ENCODE measurements at regions of chr22 and their contacts with region 1.

Region 1: GRCh38 chr22:41589391-41590241 is at the start of gene PMM1:
- DNase-seq: peak; percentile 100
- ATAC-seq: peak; percentile 97
- H3K4me3 Mint-ChIP-seq: peak within 1 kb of the TSS; percentile 99
- H3K27ac Mint-ChIP-seq: peak within 1 kb of the TSS; percentile 96
- H3K4me1 Mint-ChIP-seq: peaks cover 20% of the 10 kb centered on the region
- H3K27me3 Mint-ChIP-seq: no peaks in the 10 kb centered on the region
- total RNA-seq, gene PMM1: 40.4 to 50.0 TPM

Region 2: DNA sequence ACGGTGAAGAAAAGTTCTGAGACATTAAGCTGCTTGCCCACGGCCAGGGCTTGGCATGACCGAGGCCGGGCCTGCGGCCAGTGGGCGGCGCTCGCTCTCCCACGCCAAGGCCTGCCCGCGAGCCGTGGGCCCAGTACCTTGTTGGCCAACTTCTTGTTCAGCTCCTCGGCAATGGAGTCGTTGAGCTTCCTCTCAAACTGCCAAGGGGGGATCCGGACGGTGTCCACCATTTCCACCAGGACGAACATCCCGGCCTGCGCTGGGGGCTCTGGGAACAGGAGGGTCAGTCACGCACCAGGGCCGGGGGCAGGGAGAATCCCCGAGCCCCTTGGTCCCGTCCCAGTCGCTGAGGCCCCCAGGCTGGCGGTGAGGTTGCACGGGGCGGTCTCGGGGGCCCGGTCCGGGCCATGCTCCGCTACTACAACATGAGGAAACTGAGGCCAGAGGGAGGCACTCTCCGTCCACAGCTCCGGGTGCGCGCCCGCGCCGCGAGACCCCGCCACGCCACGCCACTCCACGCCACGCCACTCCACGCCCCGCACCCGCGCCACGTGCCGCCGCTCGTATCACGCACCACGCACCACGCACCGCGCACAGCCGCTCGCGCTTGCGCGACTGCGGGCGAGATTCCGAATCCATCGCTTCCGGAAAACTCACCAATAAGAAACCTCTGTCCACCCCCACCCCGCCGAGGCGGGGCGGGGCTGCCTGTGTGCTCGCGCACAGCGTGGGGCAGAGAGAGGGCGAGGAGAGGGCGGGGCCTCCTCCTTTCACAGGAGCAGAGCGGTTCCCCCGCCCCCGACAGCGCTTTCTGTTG is 45.6 kb before region 1 on chr22 and contains the start of gene POLR3H:
- CTCF ChIA-PET with region 1: interaction called, 10 read pairs
- DNase-seq: peak; percentile 98
- ATAC-seq: peak; percentile 98
- H3K4me3 Mint-ChIP-seq: peak within 1 kb of the TSS; percentile 93
- H3K27ac Mint-ChIP-seq: peak within 1 kb of the TSS; percentile 92
- H3K4me1 Mint-ChIP-seq: peaks cover 40% of the 10 kb centered on the region
- H3K27me3 Mint-ChIP-seq: no peaks in the 10 kb centered on the region
- total RNA-seq, gene POLR3H: 32.4 to 43.7 TPM

Region 3: GRCh38 chr22:41565403-41566054 is 24.1 kb before region 1 on chr22:
- CTCF ChIA-PET with region 1: no interaction called
- DNase-seq: peak; percentile 71
- ATAC-seq: peak; percentile 91
- H3K4me3 Mint-ChIP-seq: no peak overlapping the region
- H3K27ac Mint-ChIP-seq: peak overlapping the region; percentile 19
- H3K4me1 Mint-ChIP-seq: peaks cover 11% of the 10 kb centered on the region
- H3K27me3 Mint-ChIP-seq: peaks cover 30% of the 10 kb centered on the region

Region 4: DNA sequence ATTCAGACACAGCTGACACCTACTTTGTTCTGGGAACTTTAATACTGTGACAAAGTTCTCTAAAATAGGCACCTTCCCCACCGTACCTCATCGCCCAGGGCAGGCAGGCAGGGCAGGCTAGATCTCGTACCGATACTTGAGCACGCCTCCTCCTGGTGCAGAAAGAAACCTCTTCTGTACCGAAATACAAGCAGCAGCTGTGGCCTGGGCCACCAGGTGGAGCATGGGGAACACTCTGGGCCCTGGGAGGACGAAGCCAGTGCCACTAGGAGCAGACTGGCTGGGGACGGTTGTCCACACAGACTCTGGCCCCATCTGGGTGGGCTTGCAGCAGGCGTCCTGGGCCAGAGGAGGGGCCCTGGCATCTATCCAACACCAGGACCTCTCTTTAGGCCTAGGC is 12.7 kb before region 1 on chr22:
- CTCF ChIA-PET with region 1: interaction called, 20 read pairs
- DNase-seq: peak; percentile 60
- ATAC-seq: peak; percentile 72
- H3K4me3 Mint-ChIP-seq: no peak overlapping the region
- H3K27ac Mint-ChIP-seq: no peak overlapping the region
- H3K4me1 Mint-ChIP-seq: peaks cover 2% of the 10 kb centered on the region
- H3K27me3 Mint-ChIP-seq: no peaks in the 10 kb centered on the region

Region 5: DNA sequence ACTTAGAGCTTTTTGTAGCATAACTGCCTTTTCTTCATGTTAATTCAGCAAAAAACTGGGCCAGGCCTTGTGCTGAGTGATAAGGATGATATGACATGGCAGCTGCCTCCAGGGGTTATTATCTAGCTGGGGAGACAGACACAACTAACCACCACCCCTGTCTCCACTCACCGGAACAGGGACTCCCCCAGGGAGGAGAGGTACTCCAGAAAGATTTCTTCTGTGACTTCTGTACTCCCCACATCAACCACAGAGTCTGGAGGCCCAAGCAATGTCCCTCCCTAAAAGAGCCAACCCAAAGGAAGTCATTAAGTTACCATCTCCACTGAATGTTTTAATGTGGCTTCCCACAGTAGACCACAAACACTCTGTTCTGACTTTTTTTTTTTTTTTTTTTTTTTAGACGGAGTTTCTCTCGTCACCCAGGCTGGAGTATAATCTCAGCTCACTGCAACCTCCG is 14.3 kb after region 1 on chr22:
- CTCF ChIA-PET with region 1: interaction called, 13 read pairs
- DNase-seq: peak; percentile 90
- ATAC-seq: peak; percentile 95
- H3K4me3 Mint-ChIP-seq: peak overlapping the region; percentile 5
- H3K27ac Mint-ChIP-seq: peak overlapping the region; percentile 79
- H3K4me1 Mint-ChIP-seq: peaks cover 47% of the 10 kb centered on the region
- H3K27me3 Mint-ChIP-seq: no peaks in the 10 kb centered on the region

Region 6: GRCh38 chr22:41682033-41682807 is 92.6 kb after region 1 on chr22:
- CTCF ChIA-PET with region 1: no interaction called
- DNase-seq: peak; percentile 91
- ATAC-seq: peak; percentile 91
- H3K4me3 Mint-ChIP-seq: peak overlapping the region; percentile 100
- H3K27ac Mint-ChIP-seq: peak overlapping the region; percentile 97
- H3K4me1 Mint-ChIP-seq: peaks cover 28% of the 10 kb centered on the region
- H3K27me3 Mint-ChIP-seq: no peaks in the 10 kb centered on the region